ENCODE measurements at regions of chr16 and their contacts with region 1.

Region 1: DNA sequence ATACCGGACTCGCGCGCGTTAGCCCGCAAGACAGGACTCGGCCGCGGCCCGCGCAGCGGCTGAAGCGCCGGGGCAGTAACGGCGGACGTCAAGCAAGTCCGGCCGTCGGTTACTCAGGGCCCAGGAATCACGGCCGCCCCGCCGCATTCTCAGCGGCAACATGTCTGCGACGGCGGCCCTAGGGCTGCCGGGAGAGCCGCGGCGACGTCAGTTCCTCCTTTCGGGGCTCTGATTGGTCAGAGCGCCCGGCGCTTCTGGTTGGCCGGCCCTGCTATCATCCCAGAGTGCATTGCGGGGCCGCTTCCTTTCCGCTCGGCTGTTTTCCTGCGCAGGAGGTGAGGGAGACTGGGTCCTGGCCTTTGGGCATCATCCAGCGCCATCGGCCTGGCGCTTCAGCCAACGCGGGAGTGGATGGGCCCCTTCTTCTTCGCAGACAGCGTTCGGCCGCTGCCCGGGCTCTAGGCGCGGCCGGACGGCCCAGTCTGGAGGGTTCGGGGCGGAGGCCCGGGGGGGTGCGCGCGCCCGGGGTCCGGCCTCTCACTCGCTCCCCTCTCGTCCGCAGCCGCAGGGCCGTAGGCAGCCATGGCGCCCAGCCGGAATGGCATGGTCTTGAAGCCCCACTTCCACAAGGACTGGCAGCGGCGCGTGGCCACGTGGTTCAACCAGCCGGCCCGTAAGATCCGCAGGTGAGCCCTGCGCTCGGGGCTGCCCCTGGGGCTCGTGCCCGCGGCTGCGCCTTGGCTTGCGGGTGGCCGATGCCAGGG is at the start of gene RPL13:
- DNase-seq: peak; percentile 83
- ATAC-seq: peak; percentile 92
- H3K4me3 Mint-ChIP-seq: peak within 1 kb of the TSS; percentile 96
- H3K27ac Mint-ChIP-seq: peak within 1 kb of the TSS; percentile 97
- H3K4me1 Mint-ChIP-seq: peaks cover 48% of the 10 kb centered on the region
- H3K27me3 Mint-ChIP-seq: no peaks in the 10 kb centered on the region
- CTCF ChIP-seq: no peak
- total RNA-seq, gene RPL13: 3,566 and 4,063 TPM in 2 replicates

Region 2: GRCh38 chr16:88941913-88942909 is 618.3 kb before region 1 on chr16:
- CTCF ChIA-PET with region 1: no interaction called
- POLR2A ChIA-PET with region 1: no interaction called
- intact Hi-C with region 1: loop called (anchors 10 kb)
- DNase-seq: peak; percentile 77
- ATAC-seq: peak; percentile 67
- H3K4me3 Mint-ChIP-seq: peak overlapping the region; percentile 79
- H3K27ac Mint-ChIP-seq: peak overlapping the region; percentile 66
- H3K4me1 Mint-ChIP-seq: peaks cover 46% of the 10 kb centered on the region
- H3K27me3 Mint-ChIP-seq: no peaks in the 10 kb centered on the region
- CTCF ChIP-seq: peak; percentile 54

Region 3: GRCh38 chr16:89319883-89320781 is 240.4 kb before region 1 on chr16:
- CTCF ChIA-PET with region 1: no interaction called
- POLR2A ChIA-PET with region 1: interaction called, 9 read pairs
- intact Hi-C with region 1: loop called (anchors 5 kb)
- DNase-seq: no peak
- ATAC-seq: peak; percentile 35
- H3K4me3 Mint-ChIP-seq: peak overlapping the region; percentile 56
- H3K27ac Mint-ChIP-seq: peak overlapping the region; percentile 36
- H3K4me1 Mint-ChIP-seq: peaks cover 92% of the 10 kb centered on the region
- H3K27me3 Mint-ChIP-seq: no peaks in the 10 kb centered on the region
- CTCF ChIP-seq: no peak

Region 4: GRCh38 chr16:89490387-89491237 is 69.9 kb before region 1 on chr16 and contains the start of gene ANKRD11:
- CTCF ChIA-PET with region 1: interaction called, 3 read pairs
- POLR2A ChIA-PET with region 1: interaction called, 6 read pairs
- intact Hi-C with region 1: loop called (anchors 1 kb)
- DNase-seq: peak; percentile 99
- ATAC-seq: peak; percentile 80
- H3K4me3 Mint-ChIP-seq: peak within 1 kb of the TSS; percentile 91
- H3K27ac Mint-ChIP-seq: peak within 1 kb of the TSS; percentile 97
- H3K4me1 Mint-ChIP-seq: peaks cover 58% of the 10 kb centered on the region
- H3K27me3 Mint-ChIP-seq: no peaks in the 10 kb centered on the region
- CTCF ChIP-seq: no peak
- total RNA-seq, gene ANKRD11: 216 and 243 TPM in 2 replicates

Region 5: DNA sequence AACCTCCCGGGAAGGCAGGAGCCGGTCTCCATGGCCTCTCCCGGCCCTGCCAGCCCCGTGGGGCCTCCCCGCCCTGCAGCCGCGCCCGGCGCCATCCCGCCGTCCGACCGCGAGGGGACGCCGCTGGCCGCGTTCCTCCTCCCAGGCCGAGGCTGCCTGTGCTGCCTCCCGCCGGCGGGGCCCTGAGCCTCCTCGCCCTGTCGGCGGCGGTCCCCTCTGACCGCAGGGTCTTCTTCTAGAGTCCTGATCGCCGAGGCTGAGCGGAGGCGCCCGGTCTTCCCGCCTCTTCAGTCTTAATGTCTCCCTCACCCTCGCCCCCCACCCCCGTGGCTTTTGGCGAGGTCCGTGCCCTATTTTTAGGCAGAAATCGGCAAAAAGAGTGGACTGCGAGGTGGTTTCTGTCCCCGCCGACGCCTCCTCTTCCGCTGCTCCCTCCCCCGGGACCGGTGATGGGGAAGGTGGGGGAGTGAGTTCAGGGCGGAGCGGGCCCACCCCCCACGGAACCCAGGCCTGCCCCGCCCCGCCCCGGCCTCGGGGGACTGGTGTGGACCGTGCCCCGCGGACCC is 14.2 kb after region 1 on chr16:
- CTCF ChIA-PET with region 1: interaction called, 3 read pairs
- POLR2A ChIA-PET with region 1: interaction called, 11 read pairs
- intact Hi-C with region 1: no loop called
- DNase-seq: peak; percentile 49
- ATAC-seq: peak; percentile 57
- H3K4me3 Mint-ChIP-seq: peak overlapping the region; percentile 74
- H3K27ac Mint-ChIP-seq: no peak overlapping the region
- H3K4me1 Mint-ChIP-seq: peaks cover 22% of the 10 kb centered on the region
- H3K27me3 Mint-ChIP-seq: peaks cover 10% of the 10 kb centered on the region
- CTCF ChIP-seq: no peak

Measured in activated B cell treated with CpG ODN at 0.5 μM for 24 hours (primary cell).